PC-9 (cell line): ENCODE measurements at regions of chr3 and their contacts with region 1.

Region 1: GRCh38 chr3:162295323-162295983 is 798.8 kb downstream of the OTOL1 start:
- DNase-seq: peak; percentile 44 to 94
- H3K4me3 ChIP-seq: no peak overlapping the region
- H3K27ac ChIP-seq: peak overlapping the region; percentile 84
- H3K4me1 ChIP-seq: peaks cover 19% of the 10 kb centered on the region
- H3K27me3 ChIP-seq: no peaks in the 10 kb centered on the region
- CTCF ChIP-seq: no peak

Region 2: GRCh38 chr3:162217647-162218046 is 77.8 kb before region 1 on chr3:
- CTCF ChIA-PET with region 1: no interaction called
- POLR2A ChIA-PET with region 1: interaction called, 12 read pairs
- intact Hi-C with region 1: no loop called
- DNase-seq: no peak
- H3K4me3 ChIP-seq: no peak overlapping the region
- H3K27ac ChIP-seq: no peak overlapping the region
- H3K4me1 ChIP-seq: no peaks in the 10 kb centered on the region
- H3K27me3 ChIP-seq: no peaks in the 10 kb centered on the region
- CTCF ChIP-seq: no peak

Region 3: DNA sequence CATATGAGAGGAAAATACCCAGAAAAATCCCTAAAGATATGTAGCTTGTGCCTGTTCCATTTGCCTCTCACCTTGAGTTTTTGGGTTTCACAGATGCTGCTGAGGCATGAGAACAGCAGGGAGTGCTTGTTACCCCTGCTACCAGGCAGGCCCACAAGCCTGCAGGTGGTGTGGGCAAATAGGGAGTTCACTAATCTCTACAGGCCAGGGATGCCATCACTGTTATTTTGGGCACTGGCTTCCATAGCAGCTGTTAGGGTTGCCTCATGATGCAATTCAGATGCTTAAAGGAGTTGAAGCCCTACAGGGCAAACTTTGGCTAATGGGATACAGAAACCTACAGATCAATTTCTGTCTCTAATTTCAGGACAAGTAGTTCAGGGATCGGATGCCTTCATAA is 74.7 kb after region 1 on chr3:
- CTCF ChIA-PET with region 1: no interaction called
- POLR2A ChIA-PET with region 1: no interaction called
- intact Hi-C with region 1: no loop called
- DNase-seq: no peak
- H3K4me3 ChIP-seq: no peak overlapping the region
- H3K27ac ChIP-seq: no peak overlapping the region
- H3K4me1 ChIP-seq: no peaks in the 10 kb centered on the region
- H3K27me3 ChIP-seq: no peaks in the 10 kb centered on the region
- CTCF ChIP-seq: no peak

Region 4: GRCh38 chr3:162390891-162391290 is 95.4 kb after region 1 on chr3:
- CTCF ChIA-PET with region 1: no interaction called
- POLR2A ChIA-PET with region 1: interaction called, 4 read pairs
- intact Hi-C with region 1: loop called (anchors 1 kb)
- DNase-seq: peak in 1 of 2 experiments; percentile 21
- H3K4me3 ChIP-seq: 0 out of 2 replicates have a peak overlapping the region, but pooled peaks have one; percentile 19
- H3K27ac ChIP-seq: peak overlapping the region; percentile 70
- H3K4me1 ChIP-seq: peaks cover 10% of the 10 kb centered on the region
- H3K27me3 ChIP-seq: no peaks in the 10 kb centered on the region
- CTCF ChIP-seq: no peak

Region 5: DNA sequence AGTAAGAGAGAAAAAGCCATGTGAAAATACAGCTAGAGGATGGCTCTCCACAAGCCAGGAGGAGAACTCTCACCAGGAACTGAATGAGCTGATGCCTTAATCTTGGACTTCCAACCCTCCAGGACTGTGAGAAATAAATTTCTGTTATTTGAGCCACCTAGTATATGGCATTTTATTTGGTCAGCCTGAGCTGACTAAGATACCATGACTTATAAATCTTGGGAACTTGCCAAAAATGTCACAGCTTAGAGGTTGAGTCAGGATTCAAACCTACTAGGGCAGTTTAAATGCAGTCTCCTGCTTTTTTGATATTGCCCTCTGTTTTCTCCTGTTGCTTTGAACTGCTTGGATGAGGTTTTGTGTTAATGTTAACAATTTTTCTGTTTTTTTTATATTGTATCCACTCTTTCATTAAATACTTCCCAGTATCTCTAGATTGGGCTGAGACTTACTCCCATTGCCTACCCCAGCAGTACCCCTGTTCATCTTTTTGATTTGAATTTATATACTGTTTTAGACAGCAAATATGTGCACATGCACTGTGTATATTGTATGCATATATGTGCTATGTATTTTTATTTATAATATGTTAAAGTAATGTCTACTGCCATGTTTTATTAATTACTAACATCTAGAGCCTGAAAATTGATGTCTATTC is 424.4 kb after region 1 on chr3:
- CTCF ChIA-PET with region 1: no interaction called
- POLR2A ChIA-PET with region 1: interaction called, 11 read pairs
- intact Hi-C with region 1: no loop called
- DNase-seq: peak; percentile 10 to 66
- H3K4me3 ChIP-seq: no peak overlapping the region
- H3K27ac ChIP-seq: no peak overlapping the region
- H3K4me1 ChIP-seq: no peaks in the 10 kb centered on the region
- H3K27me3 ChIP-seq: no peaks in the 10 kb centered on the region
- CTCF ChIP-seq: no peak